Aorta (tissue), 5 donors: ENCODE measurements at regions of chr17 and their contacts with region 1.

Region 1: GRCh38 chr17:43576563-43577229 is 30.6 kb upstream of the ETV4 start:
- DNase-seq: peak; percentile 74 to 89
- ATAC-seq: peak; percentile 84
- H3K4me3 ChIP-seq: no peak overlapping the region
- H3K27ac ChIP-seq: no peak overlapping the region
- H3K4me1 ChIP-seq: no peaks in the 10 kb centered on the region
- H3K27me3 ChIP-seq: no peaks in the 10 kb centered on the region

Region 2: DNA sequence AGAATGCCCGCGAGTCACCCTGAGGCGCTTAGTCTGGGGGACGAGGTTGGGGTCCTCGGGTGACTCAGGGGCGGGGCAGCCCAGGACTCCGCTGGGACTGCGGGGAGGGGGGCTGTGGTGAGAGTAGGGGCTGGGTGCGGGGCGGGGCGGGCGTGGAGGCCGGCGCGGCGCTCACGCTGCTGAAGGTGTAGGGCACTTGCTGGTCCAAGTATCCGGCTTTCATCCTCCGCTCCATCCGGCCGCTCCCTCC is 31.4 kb before region 1 on chr17:
- intact Hi-C with region 1: no loop called
- DNase-seq: peak; percentile 52 to 77
- ATAC-seq: peak; percentile 54
- H3K4me3 ChIP-seq: peak overlapping the region; percentile 60 to 61
- H3K27ac ChIP-seq: no peak overlapping the region
- H3K4me1 ChIP-seq: no peaks in the 10 kb centered on the region
- H3K27me3 ChIP-seq: no peaks in the 10 kb centered on the region

Region 3: GRCh38 chr17:43673516-43674323 is 97.0 kb after region 1 on chr17:
- intact Hi-C with region 1: loop called (anchors 1 to 2 kb)
- DNase-seq: peak; percentile 79 to 89
- ATAC-seq: peak; percentile 83
- H3K4me3 ChIP-seq: no peak overlapping the region
- H3K27ac ChIP-seq: no peak overlapping the region
- H3K4me1 ChIP-seq: no peaks in the 10 kb centered on the region
- H3K27me3 ChIP-seq: no peaks in the 10 kb centered on the region

Region 4: DNA sequence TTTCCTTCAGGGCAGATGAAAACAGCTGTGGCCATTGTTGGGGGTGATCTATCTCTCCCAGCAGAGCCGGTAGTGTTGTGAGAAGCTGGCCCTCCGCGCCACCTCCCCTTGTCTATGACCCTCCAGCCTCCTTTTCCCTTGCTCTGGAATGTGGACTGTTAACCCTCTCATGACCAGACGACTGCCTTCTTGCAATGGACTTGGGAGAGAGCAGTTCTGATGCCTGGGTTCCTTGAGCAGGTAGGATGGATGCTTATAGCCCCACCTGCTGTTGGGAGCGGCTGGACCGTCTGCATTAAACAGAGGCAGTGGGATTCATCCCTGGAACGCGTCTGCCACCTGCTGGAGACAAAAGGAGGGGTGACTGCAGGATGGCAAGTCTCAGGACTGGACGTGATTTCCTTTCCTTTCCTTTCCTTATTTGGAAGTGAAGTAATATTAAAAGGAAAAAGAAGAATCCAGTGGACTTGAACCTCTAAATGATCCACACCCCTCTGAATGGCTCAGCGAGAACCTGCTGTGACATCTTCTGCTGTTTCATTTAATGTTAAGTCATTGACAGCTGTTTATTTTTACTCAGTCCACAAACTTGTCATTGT is 183.7 kb after region 1 on chr17:
- intact Hi-C with region 1: loop called (anchors 5 kb)
- DNase-seq: peak; percentile 96 to 98
- ATAC-seq: peak; percentile 92
- H3K4me3 ChIP-seq: no peak overlapping the region
- H3K27ac ChIP-seq: no peak overlapping the region
- H3K4me1 ChIP-seq: peaks cover 0 to 2% of the 10 kb centered on the region in 2 donors
- H3K27me3 ChIP-seq: no peaks in the 10 kb centered on the region